Transverse colon (tissue), 4 donors: ENCODE measurements at regions of chr2 and their contacts with region 1.

Region 1: GRCh38 chr2:189412330-189412953 is 28.8 kb upstream of the WDR75 start:
- DNase-seq: peak; percentile 21
- H3K4me3 ChIP-seq: no peak overlapping the region
- H3K27ac ChIP-seq: peak overlapping the region; percentile 66 to 76 (median 70)
- H3K4me1 ChIP-seq: peaks cover 0 to 16% (median 8%) of the 10 kb centered on the region in 4 donors
- H3K27me3 ChIP-seq: no peaks in the 10 kb centered on the region
- CTCF ChIP-seq: peak; percentile 70 to 87 (median 71)
- EP300 ChIP-seq: no peak
- POLR2A ChIP-seq: no peak

Region 2: DNA sequence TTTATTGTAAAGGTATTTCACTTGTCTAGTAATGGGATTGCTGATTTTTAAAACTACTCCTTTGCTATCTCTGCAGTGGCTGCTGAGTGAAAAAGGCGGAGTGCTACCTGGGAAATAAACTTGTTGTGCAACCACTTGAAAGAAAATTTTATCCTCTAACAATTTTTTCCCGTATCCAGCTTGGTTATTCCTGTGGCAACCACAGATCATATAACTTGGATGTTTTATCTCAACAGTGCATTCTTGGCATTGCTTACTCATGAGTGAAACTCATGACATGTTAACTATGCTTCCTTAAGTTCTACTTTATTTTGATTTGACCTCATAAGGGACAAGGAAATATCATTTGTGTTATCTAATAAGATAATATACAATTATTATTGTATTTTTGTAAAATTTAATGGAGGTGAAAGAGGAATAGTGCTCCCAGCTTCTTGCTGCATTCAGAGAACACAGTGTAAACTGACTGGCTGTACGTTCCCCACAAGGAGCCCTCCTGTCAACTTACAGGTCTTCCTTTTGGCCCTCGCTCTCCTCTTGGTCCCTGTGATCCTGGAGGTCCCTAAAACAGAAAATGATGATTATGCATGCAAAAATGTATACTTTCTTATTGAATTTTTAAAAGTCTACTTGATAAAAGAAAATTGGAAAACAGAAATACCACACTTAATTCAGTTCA is 315.5 kb before region 1 on chr2:
- in situ Hi-C with region 1: loop called in 3 of 4 experiments (anchors 10 to 25 kb)
- intact Hi-C with region 1: loop called (anchors 10 kb)
- DNase-seq: no peak
- H3K4me3 ChIP-seq: no peak overlapping the region
- H3K27ac ChIP-seq: peak overlapping the region in 3 of 4 donors; percentile 21 to 42 (median 32)
- H3K4me1 ChIP-seq: peaks cover 0 to 11% (median 3%) of the 10 kb centered on the region in 4 donors
- H3K27me3 ChIP-seq: no peaks in the 10 kb centered on the region
- CTCF ChIP-seq: no peak
- EP300 ChIP-seq: no peak
- POLR2A ChIP-seq: no peak

Region 3: GRCh38 chr2:189115126-189115525 is 297.3 kb before region 1 on chr2:
- in situ Hi-C with region 1: loop called in 1 of 4 experiments (anchors 25 kb)
- intact Hi-C with region 1: no loop called
- DNase-seq: no peak
- H3K4me3 ChIP-seq: no peak overlapping the region
- H3K27ac ChIP-seq: no peak overlapping the region
- H3K4me1 ChIP-seq: peaks cover 0 to 4% (median 0%) of the 10 kb centered on the region in 4 donors
- H3K27me3 ChIP-seq: no peaks in the 10 kb centered on the region
- CTCF ChIP-seq: no peak
- EP300 ChIP-seq: no peak
- POLR2A ChIP-seq: no peak

Region 4: GRCh38 chr2:189142893-189143759 is 269.3 kb before region 1 on chr2:
- in situ Hi-C with region 1: loop called in 1 of 4 experiments (anchors 25 kb)
- intact Hi-C with region 1: no loop called
- DNase-seq: peak; percentile 24
- H3K4me3 ChIP-seq: no peak overlapping the region
- H3K27ac ChIP-seq: no peak overlapping the region
- H3K4me1 ChIP-seq: peaks cover 0 to 7% (median 0%) of the 10 kb centered on the region in 4 donors
- H3K27me3 ChIP-seq: no peaks in the 10 kb centered on the region
- CTCF ChIP-seq: peak; percentile 59 to 80 (median 70)
- EP300 ChIP-seq: no peak
- POLR2A ChIP-seq: no peak

Region 5: GRCh38 chr2:189347540-189347939 is 64.9 kb before region 1 on chr2:
- in situ Hi-C with region 1: no loop called
- intact Hi-C with region 1: loop called (anchors 5 kb)
- DNase-seq: peak; percentile 19
- H3K4me3 ChIP-seq: no peak overlapping the region
- H3K27ac ChIP-seq: peak overlapping the region; percentile 59 to 75 (median 70)
- H3K4me1 ChIP-seq: peaks cover 2 to 31% (median 13%) of the 10 kb centered on the region in 4 donors
- H3K27me3 ChIP-seq: no peaks in the 10 kb centered on the region
- CTCF ChIP-seq: no peak
- EP300 ChIP-seq: no peak
- POLR2A ChIP-seq: no peak